Activated CD4-positive, alpha-beta memory T cell treated with anti-CD3 and anti-CD28 coated beads, Interleukin-2, amount 10 ng/mL, durations not matched to agents 7 days and 5 days (primary cell): ENCODE measurements at regions of chr7 and their contacts with region 1.

Region 1: GRCh38 chr7:5494683-5495561 is 71.3 kb upstream of the TNRC18 start:
- DNase-seq: peak; percentile 84
- H3K4me3 Mint-ChIP-seq: no peak overlapping the region
- H3K27ac Mint-ChIP-seq: no peak overlapping the region
- H3K4me1 Mint-ChIP-seq: peaks cover 24% of the 10 kb centered on the region
- H3K27me3 Mint-ChIP-seq: no peaks in the 10 kb centered on the region

Region 2: GRCh38 chr7:5320802-5321396 is 174.0 kb before region 1 on chr7:
- CTCF ChIA-PET with region 1: no interaction called
- POLR2A ChIA-PET with region 1: no interaction called
- DNase-seq: no peak
- H3K4me3 Mint-ChIP-seq: no peak overlapping the region
- H3K27ac Mint-ChIP-seq: no peak overlapping the region
- H3K4me1 Mint-ChIP-seq: no peaks in the 10 kb centered on the region
- H3K27me3 Mint-ChIP-seq: no peaks in the 10 kb centered on the region

Region 3: GRCh38 chr7:5396999-5397663 is 97.8 kb before region 1 on chr7:
- CTCF ChIA-PET with region 1: interaction called, 14 read pairs
- POLR2A ChIA-PET with region 1: interaction called, 3 read pairs
- DNase-seq: peak; percentile 96
- H3K4me3 Mint-ChIP-seq: peak overlapping the region; percentile 85
- H3K27ac Mint-ChIP-seq: peak overlapping the region; percentile 95
- H3K4me1 Mint-ChIP-seq: peaks cover 51% of the 10 kb centered on the region
- H3K27me3 Mint-ChIP-seq: no peaks in the 10 kb centered on the region

Region 4: DNA sequence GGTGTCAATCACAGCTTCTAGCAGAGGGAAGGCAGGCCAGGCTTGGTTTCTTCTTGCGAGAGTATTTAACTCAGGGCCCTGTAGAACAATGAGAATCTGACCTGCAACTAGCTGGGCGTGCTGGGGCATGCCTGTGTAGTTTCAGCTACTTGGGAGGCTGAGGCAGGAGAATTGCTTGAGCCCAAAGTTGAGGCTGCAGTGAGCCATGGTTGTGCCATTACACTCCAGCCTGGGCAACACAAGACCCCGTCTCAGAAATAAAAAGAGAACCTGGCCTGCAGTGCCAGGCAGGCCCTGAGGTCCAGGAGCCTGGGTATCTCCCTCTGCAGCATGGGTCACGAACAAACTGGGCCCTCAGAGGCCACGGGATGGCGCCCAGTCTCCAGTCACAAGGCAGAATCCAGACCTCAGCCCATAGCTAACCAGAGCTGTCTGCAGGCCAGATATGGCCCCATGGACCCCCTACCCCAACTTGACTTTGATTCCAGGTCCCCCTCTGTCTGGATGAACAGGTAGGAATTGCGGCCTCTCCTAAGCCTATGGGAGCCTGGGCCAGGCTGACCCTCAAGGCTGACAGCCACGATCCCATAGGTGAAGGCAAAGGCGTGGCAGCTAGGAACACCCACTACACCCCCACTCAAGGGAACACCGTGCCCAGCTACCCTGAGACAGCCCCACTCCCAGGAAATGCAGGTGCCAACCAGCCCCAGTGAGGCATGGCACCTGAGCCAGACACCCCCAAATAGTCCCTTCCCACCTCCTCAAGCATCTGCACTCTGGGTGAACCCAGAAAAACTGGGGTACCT is 31.4 kb after region 1 on chr7:
- CTCF ChIA-PET with region 1: interaction called, 10 read pairs
- POLR2A ChIA-PET with region 1: interaction called, 20 read pairs
- DNase-seq: peak; percentile 46
- H3K4me3 Mint-ChIP-seq: peak overlapping the region; percentile 99
- H3K27ac Mint-ChIP-seq: peak overlapping the region; percentile 96
- H3K4me1 Mint-ChIP-seq: peaks cover 30% of the 10 kb centered on the region
- H3K27me3 Mint-ChIP-seq: no peaks in the 10 kb centered on the region

Region 5: GRCh38 chr7:5677538-5678294 is 182.8 kb after region 1 on chr7:
- CTCF ChIA-PET with region 1: interaction called, 25 read pairs
- POLR2A ChIA-PET with region 1: no interaction called
- DNase-seq: peak; percentile 53
- H3K4me3 Mint-ChIP-seq: no peak overlapping the region
- H3K27ac Mint-ChIP-seq: no peak overlapping the region
- H3K4me1 Mint-ChIP-seq: peaks cover 9% of the 10 kb centered on the region
- H3K27me3 Mint-ChIP-seq: no peaks in the 10 kb centered on the region

Region 6: DNA sequence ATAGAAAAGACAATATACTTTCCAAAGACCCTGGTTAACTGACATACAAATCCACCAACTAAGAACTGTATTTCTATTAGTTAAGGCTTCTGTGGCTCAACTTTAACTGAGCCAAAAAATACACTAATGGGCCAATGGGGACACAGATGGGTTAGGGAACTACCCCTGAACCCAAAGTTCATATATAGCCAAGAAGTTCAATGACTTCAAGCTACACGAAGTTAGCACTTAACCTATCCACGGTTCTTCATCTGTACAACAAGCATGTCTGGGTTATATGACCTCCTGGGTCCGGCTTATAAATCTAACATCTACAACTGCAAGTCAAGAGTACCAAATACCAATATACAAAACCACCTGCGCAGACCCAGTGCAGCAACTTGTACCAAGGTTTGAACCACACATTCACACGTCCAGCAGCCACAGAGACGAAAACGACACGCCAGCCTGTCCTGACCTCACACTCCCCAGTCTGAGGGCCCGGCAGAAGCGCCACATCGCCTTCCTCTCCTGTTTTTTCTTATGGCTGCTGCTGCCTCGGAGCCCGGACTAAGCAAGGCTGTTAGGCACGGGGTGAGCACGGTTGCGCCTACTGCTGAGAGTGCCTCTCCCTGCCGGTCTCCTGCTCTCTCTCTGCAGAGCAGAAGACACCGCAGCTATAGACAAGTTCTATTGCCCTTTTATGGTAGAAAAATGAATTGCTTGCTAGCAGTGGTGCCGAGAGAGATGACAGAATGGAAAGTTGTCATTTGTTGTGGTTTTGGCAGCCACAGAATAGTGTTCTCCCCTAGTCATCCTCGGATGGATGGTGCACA is 200.2 kb after region 1 on chr7:
- CTCF ChIA-PET with region 1: interaction called, 12 read pairs
- POLR2A ChIA-PET with region 1: no interaction called
- DNase-seq: peak; percentile 74
- H3K4me3 Mint-ChIP-seq: peak overlapping the region; percentile 58
- H3K27ac Mint-ChIP-seq: peak overlapping the region; percentile 77
- H3K4me1 Mint-ChIP-seq: peaks cover 65% of the 10 kb centered on the region
- H3K27me3 Mint-ChIP-seq: peaks cover 62% of the 10 kb centered on the region

Region 7: GRCh38 chr7:5704534-5704922 is 209.6 kb after region 1 on chr7:
- CTCF ChIA-PET with region 1: interaction called, 16 read pairs
- POLR2A ChIA-PET with region 1: interaction called, 4 read pairs
- DNase-seq: peak; percentile 79
- H3K4me3 Mint-ChIP-seq: no peak overlapping the region
- H3K27ac Mint-ChIP-seq: no peak overlapping the region
- H3K4me1 Mint-ChIP-seq: peaks cover 34% of the 10 kb centered on the region
- H3K27me3 Mint-ChIP-seq: peaks cover 8% of the 10 kb centered on the region